Activated CD4-positive, alpha-beta memory T cell treated with anti-CD3 and anti-CD28 coated beads for 36 hours (primary cell): ENCODE measurements at regions of chr5 and their contacts with region 1.

Region 1: GRCh38 chr5:59126708-59127573 is 544.1 kb downstream of the RAB3C start:
- DNase-seq: no peak
- H3K4me3 Mint-ChIP-seq: no peak overlapping the region
- H3K27ac Mint-ChIP-seq: no peak overlapping the region
- H3K4me1 Mint-ChIP-seq: peaks cover 15% of the 10 kb centered on the region
- H3K27me3 Mint-ChIP-seq: no peaks in the 10 kb centered on the region

Region 2: DNA sequence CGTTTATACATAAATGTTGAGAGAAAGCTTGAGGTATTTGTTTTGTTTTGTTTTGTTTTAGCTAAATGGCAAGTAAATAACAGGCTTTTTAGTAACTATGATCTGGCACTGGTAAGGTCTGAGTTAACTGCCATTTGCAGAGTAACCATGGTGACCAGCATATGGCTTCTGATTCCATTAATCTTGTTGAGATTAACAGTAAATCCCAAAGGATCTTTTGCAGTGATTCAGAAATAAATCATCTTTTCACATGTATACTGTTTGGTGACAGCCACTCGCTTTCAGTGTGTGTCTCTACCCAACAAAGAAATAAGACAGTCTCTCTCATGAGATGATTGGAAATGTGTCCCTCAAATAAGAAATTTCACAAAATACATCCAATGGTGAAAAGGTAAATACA is 308.5 kb before region 1 on chr5:
- CTCF ChIA-PET with region 1: no interaction called
- POLR2A ChIA-PET with region 1: no interaction called
- intact Hi-C with region 1: no loop called
- DNase-seq: no peak
- H3K4me3 Mint-ChIP-seq: no peak overlapping the region
- H3K27ac Mint-ChIP-seq: no peak overlapping the region
- H3K4me1 Mint-ChIP-seq: no peaks in the 10 kb centered on the region
- H3K27me3 Mint-ChIP-seq: no peaks in the 10 kb centered on the region

Region 3: DNA sequence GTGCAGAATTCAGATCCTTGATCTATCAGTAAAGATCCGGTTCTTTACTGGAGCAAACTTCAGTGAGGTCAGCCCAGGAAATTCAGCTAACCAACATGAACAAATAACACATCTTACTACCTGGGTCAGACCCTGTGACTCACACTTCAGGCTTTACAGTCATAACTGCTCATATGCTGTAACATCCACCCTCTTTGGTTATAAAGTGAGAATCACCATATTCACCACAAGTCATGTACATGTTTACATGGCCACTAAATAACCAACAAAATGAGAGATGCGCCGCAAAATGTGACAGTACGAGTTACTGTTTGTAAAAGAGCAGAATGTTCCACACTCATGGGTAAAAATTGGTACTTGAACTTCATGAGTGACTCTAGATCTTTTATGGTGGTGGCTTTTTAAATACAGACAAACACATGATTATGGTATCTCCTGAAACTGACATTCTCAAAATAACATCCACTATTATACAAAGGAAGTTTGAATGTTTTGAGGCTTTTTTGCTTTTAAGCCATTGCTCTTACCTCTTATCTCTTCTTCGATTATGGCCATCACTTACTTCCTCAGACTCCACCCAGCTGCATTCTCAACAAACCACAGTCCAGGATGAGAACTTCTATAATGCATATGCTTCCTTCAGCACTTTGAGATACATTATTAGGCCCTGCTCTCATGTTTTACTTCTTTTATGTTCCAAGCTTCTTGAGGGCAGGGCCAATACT is 27.5 kb before region 1 on chr5:
- CTCF ChIA-PET with region 1: interaction called, 7 read pairs
- POLR2A ChIA-PET with region 1: interaction called, 8 read pairs
- intact Hi-C with region 1: loop called (anchors 1 kb)
- DNase-seq: peak; percentile 63
- H3K4me3 Mint-ChIP-seq: peak overlapping the region; percentile 8
- H3K27ac Mint-ChIP-seq: peak overlapping the region; percentile 73
- H3K4me1 Mint-ChIP-seq: peaks cover 37% of the 10 kb centered on the region
- H3K27me3 Mint-ChIP-seq: no peaks in the 10 kb centered on the region

Region 4: DNA sequence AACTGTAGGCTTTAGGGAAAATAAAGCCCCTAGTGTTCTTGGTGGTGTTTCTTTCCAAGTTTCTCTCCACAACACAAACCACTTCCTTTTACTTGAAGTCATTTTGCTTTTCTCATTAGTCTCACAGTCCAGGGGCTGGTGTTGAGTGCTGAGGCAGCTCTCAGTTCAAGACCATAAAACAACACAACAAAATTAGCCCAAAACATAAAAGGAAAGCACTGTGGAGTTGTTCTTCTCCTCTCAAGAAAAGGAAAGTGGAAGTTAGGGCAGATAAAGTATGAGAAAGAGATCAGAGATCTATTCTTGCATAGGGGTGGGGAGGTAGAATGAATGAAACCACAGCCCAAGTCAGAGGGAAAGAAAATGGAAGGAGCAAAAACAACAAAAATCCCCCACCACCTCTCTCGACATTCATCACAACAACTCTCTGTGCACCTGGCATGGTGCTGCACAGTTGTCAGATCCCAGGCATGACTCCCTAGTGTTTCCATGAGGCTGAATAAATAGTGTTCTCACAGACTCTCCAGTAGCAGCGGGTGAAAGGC is 25.8 kb after region 1 on chr5:
- CTCF ChIA-PET with region 1: no interaction called
- POLR2A ChIA-PET with region 1: no interaction called
- intact Hi-C with region 1: loop called (anchors 1 kb)
- DNase-seq: peak; percentile 19
- H3K4me3 Mint-ChIP-seq: peak overlapping the region; percentile 7
- H3K27ac Mint-ChIP-seq: peak overlapping the region; percentile 67
- H3K4me1 Mint-ChIP-seq: peaks cover 16% of the 10 kb centered on the region
- H3K27me3 Mint-ChIP-seq: no peaks in the 10 kb centered on the region

Region 5: GRCh38 chr5:59293697-59294096 is 166.8 kb after region 1 on chr5:
- CTCF ChIA-PET with region 1: no interaction called
- POLR2A ChIA-PET with region 1: no interaction called
- intact Hi-C with region 1: no loop called
- DNase-seq: peak; percentile 15
- H3K4me3 Mint-ChIP-seq: no peak overlapping the region
- H3K27ac Mint-ChIP-seq: no peak overlapping the region
- H3K4me1 Mint-ChIP-seq: peaks cover 17% of the 10 kb centered on the region
- H3K27me3 Mint-ChIP-seq: no peaks in the 10 kb centered on the region

Region 6: DNA sequence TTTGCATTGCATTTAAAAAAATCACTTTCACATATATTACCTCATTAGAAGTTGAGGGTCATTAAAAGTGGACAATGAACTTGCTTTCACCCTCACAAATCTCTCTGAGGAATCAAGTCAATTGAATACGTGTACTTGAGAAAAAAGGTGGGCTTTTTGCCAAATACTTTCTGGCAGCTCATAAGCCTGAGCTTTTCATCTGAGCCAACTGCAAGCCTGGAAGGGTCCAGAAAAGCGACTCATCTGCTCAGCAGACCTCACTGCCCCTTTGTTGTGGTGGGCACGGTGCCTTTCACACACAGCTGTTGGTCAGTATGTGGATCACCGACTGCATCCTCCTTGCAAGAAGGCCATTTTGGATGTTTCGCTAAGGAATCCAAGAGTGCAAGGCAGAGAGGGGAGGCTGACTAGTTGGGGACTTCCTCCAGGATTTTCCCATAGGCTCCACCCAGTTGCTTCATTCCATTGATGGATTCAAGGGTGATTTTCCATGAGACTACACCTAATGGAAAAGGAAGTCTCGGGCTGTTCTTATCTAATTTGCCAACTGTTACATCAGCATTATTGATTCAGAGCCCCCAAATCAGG is 201.9 kb after region 1 on chr5:
- CTCF ChIA-PET with region 1: no interaction called
- POLR2A ChIA-PET with region 1: no interaction called
- intact Hi-C with region 1: no loop called
- DNase-seq: no peak
- H3K4me3 Mint-ChIP-seq: no peak overlapping the region
- H3K27ac Mint-ChIP-seq: no peak overlapping the region
- H3K4me1 Mint-ChIP-seq: no peaks in the 10 kb centered on the region
- H3K27me3 Mint-ChIP-seq: peaks cover 5% of the 10 kb centered on the region

Region 7: DNA sequence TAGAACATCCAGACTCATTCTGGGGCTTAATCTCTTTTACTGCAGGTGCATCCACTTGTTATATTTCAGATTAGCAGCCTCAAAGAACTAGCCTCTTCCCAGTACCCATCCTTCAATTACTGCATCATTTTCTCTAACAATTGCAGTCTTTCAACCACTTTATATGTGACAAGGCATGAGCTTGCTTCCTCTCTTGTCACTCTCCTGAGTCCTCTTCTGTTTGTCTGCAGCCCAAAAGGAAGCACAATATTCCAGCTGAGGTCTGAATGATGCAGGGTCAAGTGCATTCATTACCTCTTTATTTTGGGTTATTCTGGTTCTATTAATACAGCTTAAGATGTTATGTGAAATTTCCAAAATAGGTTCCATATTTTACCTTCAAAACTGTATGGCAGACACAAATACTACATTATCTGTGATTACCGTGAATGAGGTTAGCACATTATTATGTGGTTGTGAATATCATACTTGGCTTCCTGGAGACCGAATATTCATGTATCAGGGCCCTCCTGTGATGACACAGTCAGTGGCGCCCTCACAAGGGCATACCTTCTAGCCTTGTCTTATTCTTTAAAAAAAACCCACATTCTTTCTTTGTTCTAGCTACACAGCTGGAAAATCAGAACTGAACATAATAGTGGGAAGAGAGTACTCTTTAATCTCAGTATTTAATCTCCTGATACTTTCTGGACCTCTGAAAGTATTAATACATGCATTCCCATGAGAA is 442.8 kb after region 1 on chr5:
- CTCF ChIA-PET with region 1: no interaction called
- POLR2A ChIA-PET with region 1: no interaction called
- intact Hi-C with region 1: no loop called
- DNase-seq: no peak
- H3K4me3 Mint-ChIP-seq: no peak overlapping the region
- H3K27ac Mint-ChIP-seq: no peak overlapping the region
- H3K4me1 Mint-ChIP-seq: no peaks in the 10 kb centered on the region
- H3K27me3 Mint-ChIP-seq: no peaks in the 10 kb centered on the region